ENCODE measurements at regions of chr1 and their contacts with region 1.

Region 1: GRCh38 chr1:186225096-186225495 is 150.0 kb downstream of the TPR start:
- DNase-seq: peak in 1 of 5 donors; percentile 4
- H3K4me3 ChIP-seq: no peak overlapping the region
- H3K27ac ChIP-seq: no peak overlapping the region
- H3K4me1 ChIP-seq: no peaks in the 10 kb centered on the region
- H3K27me3 ChIP-seq: no peaks in the 10 kb centered on the region
- CTCF ChIP-seq: no peak

Region 2: DNA sequence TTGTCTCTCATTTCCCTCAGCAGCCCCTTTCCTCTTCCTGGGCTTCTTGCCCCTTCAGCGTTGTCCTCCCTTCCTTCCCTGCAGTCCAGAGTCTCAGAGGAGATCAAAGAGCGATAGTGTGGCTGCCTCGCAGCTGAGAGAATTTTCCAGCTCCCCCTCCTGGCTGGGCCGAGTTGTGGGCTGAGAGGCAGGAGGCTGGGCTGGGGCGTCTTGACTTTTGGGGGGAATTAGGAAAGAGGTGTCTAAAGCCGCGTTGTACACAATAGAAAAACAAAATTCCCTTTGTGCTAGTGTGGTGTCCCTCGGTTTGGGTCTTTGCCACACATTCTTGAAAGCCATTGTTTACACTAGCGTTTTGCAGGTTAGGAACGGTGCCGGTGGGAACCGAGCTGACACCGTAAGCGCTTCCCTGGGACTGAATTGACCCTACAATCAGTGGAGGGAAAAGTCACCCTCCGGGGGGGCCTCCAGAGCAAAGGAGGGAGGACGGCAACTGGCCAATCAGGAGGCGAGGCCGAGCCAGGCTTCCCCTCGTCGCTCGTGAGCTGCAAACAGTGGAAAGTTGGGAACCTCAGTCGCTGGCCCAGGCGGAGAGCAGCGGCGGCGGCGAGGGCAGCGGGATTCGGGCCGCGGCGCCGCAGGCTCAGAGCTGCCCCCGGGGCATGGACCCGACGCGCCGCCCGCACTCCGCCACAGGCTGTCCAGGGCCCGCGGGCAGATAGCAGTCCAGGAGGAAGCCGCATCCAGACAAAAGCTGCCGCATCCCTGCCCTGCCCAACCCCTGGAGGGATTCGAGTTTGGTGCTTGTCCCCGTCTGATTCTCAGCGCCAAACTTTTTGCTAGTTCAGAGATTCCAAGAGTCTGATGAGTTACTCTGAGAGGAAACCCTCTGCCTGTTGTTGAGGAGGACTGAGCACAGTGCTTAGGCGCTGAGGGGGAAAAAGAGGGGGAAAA is 491.0 kb before region 1 on chr1 and contains the start of gene HMCN1:
- intact Hi-C with region 1: loop called (anchors 10 kb)
- DNase-seq: peak; percentile 84 to 91 (median 89)
- H3K4me3 ChIP-seq: peak within 1 kb of the TSS; percentile 61 to 76 (median 70)
- H3K27ac ChIP-seq: peak within 1 kb of the TSS in 1 of 2 donors; percentile 3
- H3K4me1 ChIP-seq: peaks cover 0 to 4% (median 0%) of the 10 kb centered on the region in 3 donors
- H3K27me3 ChIP-seq: no peaks in the 10 kb centered on the region
- CTCF ChIP-seq: no peak
- total RNA-seq, gene HMCN1: 2.7 TPM